Activated CD8-positive, alpha-beta T cell treated with anti-CD3 and anti-CD28 coated beads for 36 hours (primary cell): ENCODE measurements at regions of chr6 and their contacts with region 1.

Region 1: DNA sequence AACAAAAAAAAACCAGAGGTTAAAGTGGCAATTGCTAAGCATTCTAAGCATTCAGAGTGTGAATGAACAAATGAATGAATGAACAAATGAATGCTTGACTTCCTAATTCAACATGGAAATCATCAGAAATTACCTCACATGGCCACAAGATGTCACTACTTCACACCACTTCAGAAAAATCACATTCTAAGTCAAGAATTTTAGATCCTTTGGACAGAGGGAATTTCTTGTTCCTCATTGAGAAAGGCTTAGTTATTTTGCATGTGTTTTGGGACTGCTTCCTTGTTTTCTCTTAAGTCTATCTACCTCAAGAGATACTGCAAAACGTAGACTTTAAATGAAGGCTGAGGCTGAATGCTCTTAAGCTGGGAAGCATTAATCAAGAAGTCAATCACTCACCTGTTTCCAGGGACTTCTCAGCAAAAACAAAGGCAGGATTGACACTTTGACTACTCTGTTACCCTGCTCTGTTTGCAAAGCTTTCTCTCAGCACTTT is 120.2 kb downstream of the MBOAT1 start:
- DNase-seq: no peak
- ATAC-seq: no peak
- H3K4me3 Mint-ChIP-seq: no peak overlapping the region
- H3K27ac Mint-ChIP-seq: no peak overlapping the region
- H3K4me1 Mint-ChIP-seq: no peaks in the 10 kb centered on the region
- H3K27me3 Mint-ChIP-seq: peaks cover 3% of the 10 kb centered on the region
- CTCF ChIP-seq: peak; percentile 72

Region 2: DNA sequence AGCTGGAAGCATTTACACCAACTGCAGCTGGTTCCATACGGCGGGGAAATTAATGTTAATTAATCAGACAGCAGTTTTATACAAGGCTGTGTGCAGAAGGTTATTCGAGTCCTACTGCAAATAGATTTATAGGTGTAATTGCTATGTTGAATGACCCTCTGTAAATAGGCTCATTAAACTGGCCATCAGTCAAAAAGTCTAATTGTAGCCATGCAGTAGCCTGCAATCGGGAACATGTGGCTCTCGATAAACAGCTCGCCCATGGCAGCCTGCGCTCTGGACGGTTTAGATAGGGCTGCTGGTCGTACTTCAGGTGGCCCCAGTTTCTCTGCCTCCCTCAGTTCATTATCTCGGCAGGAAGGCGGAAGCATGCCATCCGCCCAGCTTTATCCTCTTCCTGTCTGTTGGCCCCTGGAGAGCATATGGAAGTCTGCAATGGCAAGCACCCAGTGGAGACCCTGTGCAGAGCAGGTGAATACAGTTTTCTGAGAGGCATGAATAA is 23.0 kb before region 1 on chr6:
- CTCF ChIA-PET with region 1: no interaction called
- POLR2A ChIA-PET with region 1: no interaction called
- intact Hi-C with region 1: no loop called
- DNase-seq: no peak
- ATAC-seq: no peak
- H3K4me3 Mint-ChIP-seq: no peak overlapping the region
- H3K27ac Mint-ChIP-seq: no peak overlapping the region
- H3K4me1 Mint-ChIP-seq: no peaks in the 10 kb centered on the region
- H3K27me3 Mint-ChIP-seq: peaks cover 5% of the 10 kb centered on the region
- CTCF ChIP-seq: no peak

Region 3: GRCh38 chr6:20109526-20109925 is 17.4 kb after region 1 on chr6:
- CTCF ChIA-PET with region 1: interaction called, 13 read pairs
- POLR2A ChIA-PET with region 1: no interaction called
- intact Hi-C with region 1: no loop called
- DNase-seq: no peak
- ATAC-seq: no peak
- H3K4me3 Mint-ChIP-seq: no peak overlapping the region
- H3K27ac Mint-ChIP-seq: no peak overlapping the region
- H3K4me1 Mint-ChIP-seq: no peaks in the 10 kb centered on the region
- H3K27me3 Mint-ChIP-seq: no peaks in the 10 kb centered on the region
- CTCF ChIP-seq: no peak

Region 4: GRCh38 chr6:20126789-20127653 is 34.9 kb after region 1 on chr6:
- CTCF ChIA-PET with region 1: interaction called, 64 read pairs
- POLR2A ChIA-PET with region 1: no interaction called
- intact Hi-C with region 1: loop called (anchors 5 kb)
- DNase-seq: peak; percentile 73
- ATAC-seq: peak; percentile 80
- H3K4me3 Mint-ChIP-seq: no peak overlapping the region
- H3K27ac Mint-ChIP-seq: no peak overlapping the region
- H3K4me1 Mint-ChIP-seq: peaks cover 4% of the 10 kb centered on the region
- H3K27me3 Mint-ChIP-seq: no peaks in the 10 kb centered on the region
- CTCF ChIP-seq: peak; percentile 87

Region 5: GRCh38 chr6:20534295-20535262 is 442.5 kb after region 1 on chr6 and contains the start of gene CDKAL1:
- CTCF ChIA-PET with region 1: interaction called, 3 read pairs
- POLR2A ChIA-PET with region 1: no interaction called
- intact Hi-C with region 1: loop called (anchors 5 kb)
- DNase-seq: peak; percentile 96
- ATAC-seq: peak; percentile 95
- H3K4me3 Mint-ChIP-seq: peak within 1 kb of the TSS; percentile 97
- H3K27ac Mint-ChIP-seq: peak within 1 kb of the TSS; percentile 98
- H3K4me1 Mint-ChIP-seq: peaks cover 37% of the 10 kb centered on the region
- H3K27me3 Mint-ChIP-seq: peaks cover 1% of the 10 kb centered on the region
- CTCF ChIP-seq: no peak
- total RNA-seq, gene CDKAL1: 21.6 to 23.6 TPM